Natural killer cell (primary cell): ENCODE measurements at regions of chr17 and their contacts with region 1.

Region 1: DNA sequence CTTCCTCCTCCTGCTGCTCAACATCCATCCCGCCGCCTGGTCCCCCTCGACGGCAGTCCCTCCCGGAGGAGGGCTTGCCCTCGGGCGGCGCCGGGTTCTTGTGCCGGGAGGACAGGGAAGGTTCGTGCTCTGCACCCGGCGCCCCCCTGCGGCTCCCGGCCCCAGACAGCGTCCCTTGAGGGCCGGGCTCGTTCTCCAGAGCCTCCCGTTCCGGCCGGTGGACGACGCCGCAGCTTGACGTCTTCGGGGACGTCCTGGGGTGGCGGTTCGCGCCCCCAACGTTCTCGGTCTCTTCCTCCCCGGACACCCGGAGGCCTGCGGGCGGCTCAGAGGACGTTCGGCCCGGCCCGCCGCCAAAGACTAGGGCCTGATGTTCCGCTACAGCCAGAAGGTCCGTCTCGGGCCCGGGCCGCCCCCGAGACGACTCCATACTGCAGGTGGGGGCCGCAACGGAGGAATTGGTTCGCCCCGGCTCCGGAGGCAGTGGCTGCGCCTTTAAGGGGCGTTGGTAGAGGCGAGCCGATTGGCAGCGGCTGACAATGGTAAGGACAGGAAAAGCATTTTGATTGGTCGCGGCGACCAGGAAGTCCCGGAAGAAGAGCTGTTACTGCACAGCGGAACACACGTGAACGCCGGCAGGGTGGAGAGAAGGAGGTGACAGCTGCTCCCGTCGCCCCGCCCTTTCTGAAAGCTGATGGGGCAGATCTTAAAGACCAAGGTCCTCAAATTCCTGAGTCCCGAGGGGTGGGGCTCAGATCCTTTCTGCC is at the start of gene BORCS6:
- DNase-seq: peak; percentile 91 to 98
- ATAC-seq: peak; percentile 67 to 88 (median 75)
- H3K4me3 ChIP-seq: peak within 1 kb of the TSS; percentile 67
- H3K4me3 Mint-ChIP-seq: no peak within 1 kb of the TSS
- H3K27ac ChIP-seq: peak within 1 kb of the TSS; percentile 86
- H3K27ac Mint-ChIP-seq: no peak within 1 kb of the TSS
- H3K4me1 ChIP-seq: peaks cover 57% of the 10 kb centered on the region
- H3K4me1 Mint-ChIP-seq: peaks cover 13% of the 10 kb centered on the region in 2 donors
- H3K27me3 ChIP-seq: no peaks in the 10 kb centered on the region
- H3K27me3 Mint-ChIP-seq: no peaks in the 10 kb centered on the region
- CTCF ChIP-seq: no peak
- total RNA-seq, gene BORCS6: 10.2 to 15.6 (median 11.6) TPM

Region 2: DNA sequence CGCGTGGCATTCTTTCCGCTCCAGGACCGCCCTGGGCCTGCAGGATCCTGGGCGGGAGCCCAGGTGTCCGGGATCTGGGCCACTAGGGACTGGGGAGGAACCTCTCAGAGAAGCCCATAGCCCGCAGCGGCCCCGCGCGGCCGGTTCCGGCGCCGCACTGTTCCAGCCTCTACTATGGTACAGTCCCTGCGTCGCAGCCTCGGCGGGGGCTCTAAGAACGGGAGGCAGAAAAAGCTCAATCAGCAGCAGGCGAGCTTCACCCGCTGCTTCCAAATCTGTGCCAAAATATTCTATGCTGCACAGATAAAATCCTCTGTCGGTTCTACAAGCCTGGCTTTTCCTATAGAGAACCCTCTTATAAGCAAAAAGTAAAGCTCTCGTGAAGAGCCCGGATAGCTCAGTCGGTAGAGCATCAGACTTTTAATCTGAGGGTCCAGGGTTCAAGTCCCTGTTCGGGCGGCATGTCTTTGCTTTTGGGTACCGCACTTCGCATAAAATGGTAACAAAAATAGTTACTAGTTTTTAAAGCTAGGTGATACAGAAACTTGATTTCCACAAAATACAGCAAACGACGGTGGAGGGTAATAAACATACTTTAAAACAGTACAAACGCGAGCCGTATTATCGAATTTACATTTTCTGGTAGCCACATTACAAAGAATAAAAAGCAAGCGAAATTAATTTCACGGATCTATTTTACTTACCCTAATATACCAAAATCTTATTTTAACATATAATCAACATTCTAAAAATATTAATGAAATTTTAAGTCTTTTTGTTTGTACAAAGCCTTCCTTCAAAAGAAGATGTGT is 70.9 kb before region 1 on chr17:
- intact Hi-C with region 1: loop called (anchors 1 kb)
- DNase-seq: peak; percentile 84 to 90
- ATAC-seq: peak; percentile 62 to 79 (median 68)
- H3K4me3 ChIP-seq: peak overlapping the region; percentile 91
- H3K4me3 Mint-ChIP-seq: peak overlapping the region; percentile 93
- H3K27ac ChIP-seq: peak overlapping the region; percentile 76
- H3K27ac Mint-ChIP-seq: peak overlapping the region; percentile 98 to 100
- H3K4me1 ChIP-seq: peaks cover 57% of the 10 kb centered on the region
- H3K4me1 Mint-ChIP-seq: peaks cover 55 to 56% of the 10 kb centered on the region in 2 donors
- H3K27me3 ChIP-seq: peaks cover 48% of the 10 kb centered on the region
- H3K27me3 Mint-ChIP-seq: peaks cover 51 to 55% of the 10 kb centered on the region in 2 donors
- CTCF ChIP-seq: peak; percentile 89

Region 3: GRCh38 chr17:8138672-8139371 is 51.1 kb before region 1 on chr17:
- intact Hi-C with region 1: loop called (anchors 1 kb)
- DNase-seq: peak; percentile 96 to 98
- ATAC-seq: peak; percentile 83 to 96 (median 85)
- H3K4me3 ChIP-seq: peak overlapping the region; percentile 65
- H3K4me3 Mint-ChIP-seq: no peak overlapping the region
- H3K27ac ChIP-seq: peak overlapping the region; percentile 96
- H3K27ac Mint-ChIP-seq: no peak overlapping the region
- H3K4me1 ChIP-seq: peaks cover 28% of the 10 kb centered on the region
- H3K4me1 Mint-ChIP-seq: peaks cover 0 to 3% of the 10 kb centered on the region in 2 donors
- H3K27me3 ChIP-seq: no peaks in the 10 kb centered on the region
- H3K27me3 Mint-ChIP-seq: no peaks in the 10 kb centered on the region
- CTCF ChIP-seq: peak; percentile 93

Region 4: GRCh38 chr17:8173056-8173870 is 16.6 kb before region 1 on chr17:
- intact Hi-C with region 1: loop called (anchors 1 kb)
- DNase-seq: peak; percentile 57 to 96
- ATAC-seq: peak; percentile 81 to 92 (median 82)
- H3K4me3 ChIP-seq: peak overlapping the region; percentile 49
- H3K4me3 Mint-ChIP-seq: peak overlapping the region; percentile 90
- H3K27ac ChIP-seq: peak overlapping the region; percentile 98
- H3K27ac Mint-ChIP-seq: peak overlapping the region; percentile 99
- H3K4me1 ChIP-seq: peaks cover 47% of the 10 kb centered on the region
- H3K4me1 Mint-ChIP-seq: peaks cover 34 to 43% of the 10 kb centered on the region in 2 donors
- H3K27me3 ChIP-seq: no peaks in the 10 kb centered on the region
- H3K27me3 Mint-ChIP-seq: no peaks in the 10 kb centered on the region
- CTCF ChIP-seq: no peak

Region 5: DNA sequence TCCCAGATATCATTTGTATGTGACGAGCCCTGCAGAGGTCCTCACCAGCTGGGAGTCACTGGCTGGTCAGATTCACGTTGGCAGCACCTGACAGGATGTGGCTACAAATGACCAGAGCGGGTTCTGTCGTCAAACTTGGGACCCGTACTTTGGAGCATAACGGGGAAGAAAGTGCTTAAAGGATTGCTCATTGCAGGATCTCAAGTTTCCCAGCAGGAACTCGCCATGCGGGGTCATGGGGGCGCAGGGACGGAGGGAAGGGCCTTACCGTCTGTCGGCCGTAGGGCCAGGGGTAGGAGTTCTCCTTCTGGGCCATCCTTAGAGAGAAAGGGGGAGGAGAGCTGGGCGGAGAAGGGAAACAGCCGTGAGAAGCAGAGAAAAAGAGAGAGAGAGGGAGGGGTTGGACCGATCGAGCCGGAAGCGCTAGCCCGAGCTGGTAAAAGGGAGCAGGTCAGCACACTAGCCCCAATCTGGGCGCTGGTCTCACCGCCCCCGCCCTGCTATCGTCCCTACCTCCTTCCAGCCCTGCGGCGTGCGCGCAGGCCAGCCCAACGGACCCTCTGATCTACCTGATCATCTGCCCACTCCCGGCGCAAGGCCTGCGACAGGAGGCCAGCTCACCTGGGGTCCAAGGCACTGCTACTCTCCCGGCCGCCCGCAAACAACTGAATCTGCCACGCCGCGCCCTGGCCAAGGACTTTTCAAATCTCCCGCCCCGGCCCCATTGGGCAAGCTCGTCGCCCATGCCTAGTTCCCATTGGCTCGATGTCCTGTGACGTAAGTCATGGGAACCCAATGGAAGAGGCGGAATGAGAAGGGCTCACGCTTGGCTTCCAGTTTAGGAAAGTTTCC is 20.2 kb after region 1 on chr17 and contains the start of gene AURKB:
- intact Hi-C with region 1: no loop called
- DNase-seq: peak; percentile 91 to 97
- ATAC-seq: peak; percentile 97 to 100 (median 99)
- H3K4me3 ChIP-seq: peak within 1 kb of the TSS; percentile 63
- H3K4me3 Mint-ChIP-seq: peak within 1 kb of the TSS; percentile 98
- H3K27ac ChIP-seq: peak within 1 kb of the TSS; percentile 56
- H3K27ac Mint-ChIP-seq: peak within 1 kb of the TSS; percentile 85 to 86
- H3K4me1 ChIP-seq: peaks cover 16% of the 10 kb centered on the region
- H3K4me1 Mint-ChIP-seq: peaks cover 20 to 24% of the 10 kb centered on the region in 2 donors
- H3K27me3 ChIP-seq: no peaks in the 10 kb centered on the region
- H3K27me3 Mint-ChIP-seq: no peaks in the 10 kb centered on the region
- CTCF ChIP-seq: no peak
- total RNA-seq, gene AURKB: 2.1 to 4.8 (median 4.1) TPM

Region 6: DNA sequence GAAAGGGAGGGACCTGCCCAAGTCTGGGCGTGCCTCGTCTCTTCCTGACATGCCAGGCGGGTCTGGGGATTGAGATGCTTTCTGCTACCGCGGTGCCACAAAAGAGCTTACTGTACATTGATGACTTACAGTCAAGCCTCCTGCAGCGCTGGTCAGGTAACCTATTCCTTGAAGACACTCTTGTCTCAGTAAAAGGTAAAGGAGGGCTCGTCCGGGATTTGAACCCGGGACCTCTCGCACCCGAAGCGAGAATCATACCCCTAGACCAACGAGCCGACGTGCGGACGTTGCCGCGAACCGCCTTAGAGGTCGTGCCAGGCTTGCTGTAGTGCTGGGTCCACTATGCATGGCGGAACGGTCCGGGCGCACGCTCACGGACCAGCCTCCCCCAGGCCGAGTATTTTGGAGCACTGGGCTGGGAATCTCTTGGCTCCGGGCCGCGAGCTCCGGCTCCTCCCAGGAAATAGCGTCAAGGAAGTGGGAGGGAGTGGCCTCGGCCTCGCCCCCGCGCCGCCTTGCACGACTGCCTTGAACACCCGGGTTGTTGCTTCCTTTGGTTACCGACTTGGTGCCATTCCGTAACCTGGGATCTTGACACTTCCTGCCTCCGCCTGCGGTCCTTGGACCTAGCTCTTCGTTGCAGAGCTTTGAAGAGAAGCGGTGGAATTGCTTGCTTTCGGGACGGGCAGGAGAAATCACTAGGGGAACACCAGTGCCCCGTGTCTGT is 32.9 kb after region 1 on chr17:
- intact Hi-C with region 1: loop called (anchors 1 kb)
- DNase-seq: peak; percentile 92 to 96
- ATAC-seq: peak; percentile 39 to 64 (median 58)
- H3K4me3 ChIP-seq: peak overlapping the region; percentile 73
- H3K4me3 Mint-ChIP-seq: peak overlapping the region; percentile 99
- H3K27ac ChIP-seq: peak overlapping the region; percentile 93
- H3K27ac Mint-ChIP-seq: peak overlapping the region; percentile 100
- H3K4me1 ChIP-seq: peaks cover 50% of the 10 kb centered on the region
- H3K4me1 Mint-ChIP-seq: peaks cover 53 to 59% of the 10 kb centered on the region in 2 donors
- H3K27me3 ChIP-seq: no peaks in the 10 kb centered on the region
- H3K27me3 Mint-ChIP-seq: peaks cover 8 to 9% of the 10 kb centered on the region in 2 donors
- CTCF ChIP-seq: no peak

Region 7: GRCh38 chr17:8294814-8295316 is 105.0 kb after region 1 on chr17:
- intact Hi-C with region 1: loop called (anchors 1 kb)
- DNase-seq: no peak
- ATAC-seq: no peak
- H3K4me3 ChIP-seq: peak overlapping the region; percentile 98
- H3K4me3 Mint-ChIP-seq: peak overlapping the region; percentile 88
- H3K27ac ChIP-seq: peak overlapping the region; percentile 91
- H3K27ac Mint-ChIP-seq: peak overlapping the region; percentile 89 to 97
- H3K4me1 ChIP-seq: peaks cover 26% of the 10 kb centered on the region
- H3K4me1 Mint-ChIP-seq: peaks cover 36 to 39% of the 10 kb centered on the region in 2 donors
- H3K27me3 ChIP-seq: no peaks in the 10 kb centered on the region
- H3K27me3 Mint-ChIP-seq: no peaks in the 10 kb centered on the region
- CTCF ChIP-seq: no peak